ENCODE measurements at regions of chr20 and their contacts with region 1.

Region 1: DNA sequence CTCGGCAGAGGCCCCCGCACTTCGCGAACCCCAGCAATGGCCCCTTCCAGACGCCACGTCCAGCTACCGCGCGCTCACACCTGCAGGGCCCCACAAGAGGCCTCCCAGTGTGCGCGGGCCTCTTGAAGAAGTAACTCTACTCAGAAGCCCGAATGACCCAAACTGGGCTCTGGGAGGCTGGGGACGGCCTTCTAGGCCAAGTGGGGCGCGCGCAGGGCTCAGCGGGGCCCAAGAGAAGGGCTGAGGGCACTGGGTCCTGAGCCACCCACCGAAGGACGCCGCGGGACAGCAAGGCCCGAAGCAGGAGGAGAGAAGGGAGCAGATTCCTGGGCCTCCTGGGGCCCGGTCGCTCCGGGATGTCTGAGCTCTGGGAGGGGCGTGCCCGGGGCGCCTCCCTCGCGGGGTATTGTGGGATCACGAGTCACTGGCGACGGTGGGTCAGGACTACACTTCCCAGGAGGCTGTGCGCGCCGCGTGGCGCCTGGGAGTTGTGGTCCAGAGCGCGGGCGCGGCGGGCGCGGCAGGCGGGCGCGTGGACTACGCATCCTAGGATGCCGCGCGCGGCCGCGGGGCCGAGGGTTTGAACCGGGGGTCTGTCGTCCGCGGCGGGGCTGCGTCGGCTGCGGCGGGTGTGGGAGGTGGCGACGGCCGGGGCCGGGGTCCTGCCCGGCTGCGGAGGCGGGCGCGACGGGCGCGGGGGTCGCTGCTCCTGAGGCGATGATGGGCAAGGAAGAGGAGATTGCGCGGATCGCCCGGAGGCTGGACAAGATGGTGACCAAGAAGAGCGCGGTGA is at the start of gene TCEA2:
- DNase-seq: peak; percentile 96
- ATAC-seq: peak; percentile 83 to 91
- H3K4me3 ChIP-seq: peak within 1 kb of the TSS; percentile 97
- H3K27ac ChIP-seq: peak within 1 kb of the TSS; percentile 96 to 98
- H3K4me1 ChIP-seq: peaks cover 49% of the 10 kb centered on the region
- CTCF ChIP-seq: no peak
- EP300 ChIP-seq: no peak
- POLR2A ChIP-seq: peak; percentile 56
- RAD21 ChIP-seq: no peak
- polyA plus RNA-seq, gene TCEA2: 11.2 and 13.3 TPM in 2 replicates

Region 2: DNA sequence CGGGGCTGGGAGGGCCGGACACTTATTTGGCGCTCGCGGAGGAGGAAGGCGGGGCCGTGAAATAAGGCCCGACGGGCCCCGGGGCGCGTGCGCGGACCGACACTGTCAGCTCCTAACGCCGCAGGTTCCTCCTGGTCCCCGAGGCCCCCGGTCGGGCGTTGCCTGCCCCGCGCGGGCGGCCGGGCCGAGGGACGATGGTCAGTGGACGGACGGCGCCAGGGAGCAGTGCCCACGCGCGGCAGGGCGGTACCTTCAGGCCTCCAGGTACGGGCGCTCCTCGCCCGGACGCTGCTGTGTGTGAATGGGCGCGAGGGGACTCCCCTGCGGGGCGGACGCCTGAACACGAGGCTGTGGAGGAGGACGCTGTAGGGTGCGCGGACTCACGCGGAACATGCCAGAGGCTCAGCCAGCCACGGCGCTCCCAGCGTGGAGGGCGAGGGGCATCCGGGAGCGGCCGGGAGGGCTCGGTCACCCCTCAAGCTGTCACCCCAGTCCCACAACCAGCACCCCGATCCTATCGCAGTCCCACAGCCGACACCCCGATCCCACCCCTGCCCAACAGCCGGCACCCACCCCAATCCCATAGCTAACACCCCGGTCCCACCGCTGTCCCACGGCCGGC is 435.6 kb before region 1 on chr20:
- CTCF ChIA-PET with region 1: no interaction called
- POLR2A ChIA-PET with region 1: interaction called, 14 read pairs
- DNase-seq: peak; percentile 94 to 97
- ATAC-seq: peak; percentile 79 to 86
- H3K4me3 ChIP-seq: peak overlapping the region; percentile 97
- H3K27ac ChIP-seq: peak overlapping the region; percentile 97 to 100
- H3K4me1 ChIP-seq: peaks cover 9% of the 10 kb centered on the region
- CTCF ChIP-seq: no peak
- EP300 ChIP-seq: no peak
- POLR2A ChIP-seq: peak; percentile 73
- RAD21 ChIP-seq: no peak

Region 3: DNA sequence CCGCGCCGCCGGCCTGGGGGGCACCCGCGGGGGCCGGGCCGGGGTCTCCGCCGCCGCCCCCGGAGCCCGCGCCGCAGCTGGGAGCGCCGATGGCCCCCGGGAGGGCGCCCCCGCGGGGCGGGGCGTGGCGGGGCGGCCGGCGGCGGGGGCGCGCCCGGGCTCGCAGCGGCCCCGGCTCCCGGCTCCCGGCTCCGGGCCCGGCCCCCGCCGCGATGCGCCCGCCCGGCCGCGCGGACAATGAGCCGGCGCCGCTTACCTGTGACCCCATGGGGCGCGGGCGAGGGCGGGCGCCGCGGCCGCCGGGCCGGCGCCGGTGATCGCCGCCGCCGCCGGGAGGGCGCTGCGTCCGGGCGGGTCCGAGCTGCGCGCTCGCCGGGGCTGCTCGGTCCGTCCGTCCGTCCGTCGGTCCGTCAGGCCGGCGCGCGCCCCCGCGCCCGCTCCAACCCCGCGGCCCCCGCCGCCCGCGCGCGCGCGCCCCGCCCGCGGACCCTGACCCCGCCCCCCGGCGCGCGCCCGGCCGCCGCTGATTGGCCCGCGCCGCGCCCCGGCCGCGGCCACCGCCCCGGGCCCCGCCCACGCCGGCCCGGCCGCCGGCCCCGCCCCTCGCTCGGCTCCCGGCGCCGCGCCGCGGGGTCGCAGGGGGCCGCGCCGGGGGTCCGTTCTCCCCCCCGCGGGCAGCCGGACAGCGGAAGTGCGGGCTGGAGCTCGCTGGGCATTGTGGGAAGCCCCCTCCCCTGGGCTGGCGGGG is 231.8 kb before region 1 on chr20 and contains the start of gene ZBTB46:
- CTCF ChIA-PET with region 1: no interaction called
- POLR2A ChIA-PET with region 1: no interaction called
- DNase-seq: peak in 1 of 2 experiments; percentile 75
- ATAC-seq: peak in 1 of 2 experiments; percentile 47; a peak in 2 of 6 replicates
- H3K4me3 ChIP-seq: peak within 1 kb of the TSS; percentile 99
- H3K27ac ChIP-seq: peak within 1 kb of the TSS; percentile 78 to 88
- H3K4me1 ChIP-seq: peaks cover 23% of the 10 kb centered on the region
- CTCF ChIP-seq: no peak
- EP300 ChIP-seq: no peak
- POLR2A ChIP-seq: no peak
- RAD21 ChIP-seq: no peak
- polyA plus RNA-seq, gene ZBTB46: 0.17 and 0.26 TPM in 2 replicates

Region 4: GRCh38 chr20:63980806-63981728 is 81.7 kb before region 1 on chr20 and contains the start of gene PRPF6:
- CTCF ChIA-PET with region 1: interaction called, 11 read pairs
- POLR2A ChIA-PET with region 1: interaction called, 8 read pairs
- DNase-seq: peak; percentile 92 to 97
- ATAC-seq: peak; percentile 84 to 87
- H3K4me3 ChIP-seq: peak within 1 kb of the TSS; percentile 93
- H3K27ac ChIP-seq: peak within 1 kb of the TSS; percentile 94 to 95
- H3K4me1 ChIP-seq: peaks cover 34% of the 10 kb centered on the region
- CTCF ChIP-seq: peak; percentile 86
- EP300 ChIP-seq: no peak
- POLR2A ChIP-seq: peak; percentile 68
- RAD21 ChIP-seq: peak; percentile 30 to 51; a peak in 4 of 5 replicates
- polyA plus RNA-seq, gene PRPF6: 42.8 and 47.5 TPM in 2 replicates

Region 5: GRCh38 chr20:64044484-64045247 is 18.1 kb before region 1 on chr20:
- CTCF ChIA-PET with region 1: interaction called, 143 read pairs
- POLR2A ChIA-PET with region 1: interaction called, 29 read pairs
- DNase-seq: peak; percentile 52 to 63
- ATAC-seq: peak; percentile 71 to 82
- H3K4me3 ChIP-seq: no peak overlapping the region
- H3K27ac ChIP-seq: peak overlapping the region; percentile 65 to 86
- H3K4me1 ChIP-seq: peaks cover 27% of the 10 kb centered on the region
- CTCF ChIP-seq: no peak
- EP300 ChIP-seq: no peak
- POLR2A ChIP-seq: no peak
- RAD21 ChIP-seq: no peak

Region 6: GRCh38 chr20:64079273-64080012 is 16.7 kb after region 1 on chr20 and contains the start of gene RGS19:
- CTCF ChIA-PET with region 1: interaction called, 34 read pairs
- POLR2A ChIA-PET with region 1: interaction called, 7 read pairs
- DNase-seq: peak in 1 of 2 experiments; percentile 72
- ATAC-seq: peak; percentile 15 to 49; a peak in 5 of 6 replicates
- H3K4me3 ChIP-seq: peak within 1 kb of the TSS; percentile 89
- H3K27ac ChIP-seq: peak within 1 kb of the TSS; percentile 93 to 96
- H3K4me1 ChIP-seq: peaks cover 27% of the 10 kb centered on the region
- CTCF ChIP-seq: no peak
- EP300 ChIP-seq: no peak
- POLR2A ChIP-seq: peak; percentile 25; the same call in 1 of the 2 replicates
- RAD21 ChIP-seq: no peak
- polyA plus RNA-seq, gene RGS19: 12.3 and 13.8 TPM in 2 replicates

Measured in A549 (cell line).